Naive thymus-derived CD4-positive, alpha-beta T cell (primary cell): ENCODE measurements at regions of chr5 and their contacts with region 1.

Region 1: DNA sequence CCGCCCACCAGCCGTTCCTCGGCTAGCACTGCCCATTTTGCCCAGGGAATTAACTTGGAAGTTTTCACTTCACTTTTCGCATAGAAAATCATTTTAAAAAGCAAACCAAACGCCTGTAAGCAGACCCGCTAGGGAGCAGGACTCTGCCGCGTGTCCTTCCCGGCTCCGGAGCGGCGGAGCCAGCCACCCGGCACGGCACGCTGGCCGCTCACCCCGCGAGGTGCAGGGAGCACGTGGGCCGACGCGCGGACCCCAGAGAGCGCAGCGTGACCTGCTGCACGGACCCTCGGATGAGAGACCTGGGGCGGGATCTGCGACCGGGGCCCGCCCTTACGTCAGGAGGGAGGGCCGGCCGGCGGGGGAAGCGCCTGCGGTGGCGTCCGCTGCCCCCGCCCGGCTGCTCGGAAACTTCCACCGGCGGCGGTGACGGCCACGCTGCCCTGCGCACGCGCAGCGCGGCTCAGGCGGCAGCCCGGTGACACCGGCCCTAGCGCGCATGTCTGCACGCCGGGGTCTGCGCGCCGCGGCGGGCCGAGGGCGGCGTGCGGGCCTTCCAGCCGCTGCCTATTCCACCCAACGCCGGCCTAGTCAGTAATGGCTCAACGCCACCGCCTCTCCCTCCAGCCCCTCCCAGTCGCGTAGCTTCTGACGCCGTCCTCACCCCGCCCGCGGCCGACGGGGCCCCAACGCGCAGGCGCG is 506 bp upstream of the TENT4A start:
- DNase-seq: peak; percentile 94 to 99 (median 98)
- ATAC-seq: peak; percentile 87
- H3K4me3 ChIP-seq: peak overlapping the region; percentile 95
- H3K4me3 Mint-ChIP-seq: peak overlapping the region; percentile 80 to 92 (median 89)
- H3K27ac ChIP-seq: peak overlapping the region; percentile 95
- H3K27ac Mint-ChIP-seq: peak overlapping the region; percentile 77 to 94 (median 92)
- H3K4me1 ChIP-seq: peaks cover 21 to 24% of the 10 kb centered on the region in 2 donors
- H3K4me1 Mint-ChIP-seq: peaks cover 26 to 44% (median 33%) of the 10 kb centered on the region in 7 donors
- H3K27me3 ChIP-seq: no peaks in the 10 kb centered on the region
- H3K27me3 Mint-ChIP-seq: peaks cover 0 to 4% (median 0%) of the 10 kb centered on the region in 5 donors

Region 2: GRCh38 chr5:5421961-5422818 is 1290.5 kb before region 1 on chr5 and contains the start of gene ICE1:
- CTCF ChIA-PET with region 1: no interaction called
- POLR2A ChIA-PET with region 1: interaction called, 4 read pairs
- intact Hi-C with region 1: loop called in 1 of 2 experiments (anchors 1 kb)
- DNase-seq: peak; percentile 89 to 99 (median 96)
- ATAC-seq: peak; percentile 93
- H3K4me3 ChIP-seq: peak within 1 kb of the TSS; percentile 84
- H3K4me3 Mint-ChIP-seq: peak within 1 kb of the TSS in 7 of 10 donors; percentile 88 to 96 (median 93)
- H3K27ac ChIP-seq: peak within 1 kb of the TSS; percentile 90
- H3K27ac Mint-ChIP-seq: peak within 1 kb of the TSS in 7 of 9 donors; percentile 92 to 99 (median 97)
- H3K4me1 ChIP-seq: peaks cover 33 to 35% of the 10 kb centered on the region in 2 donors
- H3K4me1 Mint-ChIP-seq: peaks cover 6 to 24% (median 16%) of the 10 kb centered on the region in 7 donors
- H3K27me3 ChIP-seq: no peaks in the 10 kb centered on the region
- H3K27me3 Mint-ChIP-seq: no peaks in the 10 kb centered on the region
- total RNA-seq, gene ICE1: 30.2 to 47.6 (median 35.8) TPM

Region 3: DNA sequence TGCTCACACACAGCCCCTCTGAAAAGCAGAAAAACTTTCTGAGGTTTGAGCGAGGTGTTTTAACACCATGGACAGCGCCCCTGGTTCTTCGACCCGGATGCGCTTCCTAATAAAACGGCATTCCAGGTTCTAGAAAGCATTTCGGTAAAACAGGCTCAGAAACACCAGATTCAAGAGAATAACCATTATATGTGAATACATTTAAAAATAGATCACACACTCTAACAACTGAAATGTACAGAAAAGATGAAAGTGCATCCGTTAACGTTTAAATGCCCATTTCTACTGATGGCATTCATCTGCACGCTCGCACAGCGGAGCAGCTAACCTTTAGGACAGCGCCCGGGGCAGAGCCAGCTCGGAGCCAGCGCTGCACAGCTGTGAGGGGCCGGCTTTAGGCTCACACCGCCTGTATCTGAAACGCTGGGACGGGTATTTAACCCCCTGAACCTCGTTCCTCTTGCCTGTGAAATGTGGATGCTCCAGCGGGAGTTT is 25.8 kb before region 1 on chr5:
- CTCF ChIA-PET with region 1: no interaction called
- POLR2A ChIA-PET with region 1: interaction called, 3 read pairs
- intact Hi-C with region 1: loop called in 1 of 2 experiments (anchors 1 kb)
- DNase-seq: peak in 2 of 9 donors; percentile 19 to 30
- ATAC-seq: peak; percentile 64
- H3K4me3 ChIP-seq: no peak overlapping the region
- H3K4me3 Mint-ChIP-seq: peak overlapping the region in 7 of 10 donors; percentile 2 to 63 (median 30)
- H3K27ac ChIP-seq: no peak overlapping the region
- H3K27ac Mint-ChIP-seq: no peak overlapping the region
- H3K4me1 ChIP-seq: no peaks in the 10 kb centered on the region
- H3K4me1 Mint-ChIP-seq: peaks cover 0 to 11% (median 6%) of the 10 kb centered on the region in 7 donors
- H3K27me3 ChIP-seq: peaks cover 0 to 3% of the 10 kb centered on the region in 2 donors
- H3K27me3 Mint-ChIP-seq: peaks cover 35 to 76% (median 54%) of the 10 kb centered on the region in 5 donors

Region 4: GRCh38 chr5:6728011-6728794 is 15.5 kb after region 1 on chr5:
- CTCF ChIA-PET with region 1: interaction called, 5 read pairs
- POLR2A ChIA-PET with region 1: interaction called, 7 read pairs
- intact Hi-C with region 1: loop called (anchors 1 to 2 kb)
- DNase-seq: no peak
- ATAC-seq: no peak
- H3K4me3 ChIP-seq: no peak overlapping the region
- H3K4me3 Mint-ChIP-seq: peak overlapping the region in 9 of 10 donors; percentile 2 to 58 (median 52)
- H3K27ac ChIP-seq: no peak overlapping the region
- H3K27ac Mint-ChIP-seq: peak overlapping the region in 8 of 9 donors; percentile 5 to 82 (median 44)
- H3K4me1 ChIP-seq: peaks cover 22 to 56% of the 10 kb centered on the region in 2 donors
- H3K4me1 Mint-ChIP-seq: peaks cover 75 to 100% (median 95%) of the 10 kb centered on the region in 7 donors
- H3K27me3 ChIP-seq: no peaks in the 10 kb centered on the region
- H3K27me3 Mint-ChIP-seq: no peaks in the 10 kb centered on the region

Region 5: GRCh38 chr5:6745706-6746222 is 33.0 kb after region 1 on chr5:
- CTCF ChIA-PET with region 1: interaction called, 7 read pairs
- POLR2A ChIA-PET with region 1: no interaction called
- intact Hi-C with region 1: loop called (anchors 1 to 2 kb)
- DNase-seq: peak in 7 of 9 donors; percentile 33 to 62 (median 53)
- ATAC-seq: peak; percentile 85
- H3K4me3 ChIP-seq: no peak overlapping the region
- H3K4me3 Mint-ChIP-seq: no peak overlapping the region
- H3K27ac ChIP-seq: no peak overlapping the region
- H3K27ac Mint-ChIP-seq: peak overlapping the region in 3 of 9 donors; percentile 4 to 48 (median 36)
- H3K4me1 ChIP-seq: no peaks in the 10 kb centered on the region
- H3K4me1 Mint-ChIP-seq: peaks cover 2 to 10% (median 6%) of the 10 kb centered on the region in 7 donors
- H3K27me3 ChIP-seq: no peaks in the 10 kb centered on the region
- H3K27me3 Mint-ChIP-seq: no peaks in the 10 kb centered on the region

Region 6: DNA sequence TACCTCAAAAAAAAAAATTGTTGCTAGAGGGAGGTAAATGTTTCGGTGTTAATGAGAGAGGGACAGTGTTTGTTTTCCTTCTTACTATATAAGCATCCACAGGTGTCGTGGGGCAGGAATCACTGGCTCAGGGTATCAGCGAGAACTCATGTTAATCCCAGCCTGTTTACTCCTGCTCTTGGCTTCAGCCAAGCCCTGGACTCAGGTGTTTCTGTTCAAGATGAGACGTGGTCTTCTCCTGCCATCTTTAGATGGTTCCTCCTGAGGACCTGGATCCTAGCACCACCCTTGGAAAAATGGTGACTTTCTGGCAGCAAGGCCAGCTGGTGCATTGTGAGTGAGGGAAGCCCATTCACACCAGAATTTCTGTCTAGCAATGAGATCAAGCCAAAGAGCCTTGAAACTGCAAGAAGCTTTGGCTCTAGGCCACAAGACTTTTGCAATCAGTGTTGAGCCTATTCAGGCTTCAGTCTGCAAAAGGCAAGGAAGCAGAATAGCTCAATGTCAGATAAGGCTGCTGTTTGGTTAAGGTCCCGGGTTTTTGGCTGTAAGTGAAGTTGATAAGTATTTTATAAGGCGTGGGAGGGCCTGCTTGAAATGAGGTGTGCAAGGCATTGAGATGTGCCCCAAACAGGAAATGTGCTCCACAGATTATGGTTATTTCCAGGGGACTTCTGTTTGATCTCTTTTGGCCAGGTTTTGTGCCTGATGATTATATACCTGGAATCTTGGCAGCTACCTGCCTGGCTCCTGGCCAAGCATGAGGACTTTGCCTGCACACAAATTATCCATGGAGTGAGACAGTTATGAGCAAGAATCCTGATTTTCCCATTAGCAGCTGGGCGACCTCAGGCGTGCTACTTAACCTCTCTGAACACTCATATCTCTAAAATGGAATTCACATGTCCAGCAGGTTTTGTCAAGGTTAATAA is 100.3 kb after region 1 on chr5:
- CTCF ChIA-PET with region 1: no interaction called
- POLR2A ChIA-PET with region 1: no interaction called
- intact Hi-C with region 1: no loop called
- DNase-seq: no peak
- ATAC-seq: no peak
- H3K4me3 ChIP-seq: no peak overlapping the region
- H3K4me3 Mint-ChIP-seq: no peak overlapping the region
- H3K27ac ChIP-seq: no peak overlapping the region
- H3K27ac Mint-ChIP-seq: no peak overlapping the region
- H3K4me1 ChIP-seq: no peaks in the 10 kb centered on the region
- H3K4me1 Mint-ChIP-seq: no peaks in the 10 kb centered on the region
- H3K27me3 ChIP-seq: no peaks in the 10 kb centered on the region
- H3K27me3 Mint-ChIP-seq: peaks cover 4 to 15% (median 7%) of the 10 kb centered on the region in 5 donors

Region 7: GRCh38 chr5:6827526-6828219 is 114.9 kb after region 1 on chr5:
- CTCF ChIA-PET with region 1: no interaction called
- POLR2A ChIA-PET with region 1: no interaction called
- intact Hi-C with region 1: loop called in 1 of 2 experiments (anchors 5 kb)
- DNase-seq: peak in 7 of 9 donors; percentile 15 to 34 (median 27)
- ATAC-seq: peak; percentile 87
- H3K4me3 ChIP-seq: peak overlapping the region; percentile 45
- H3K4me3 Mint-ChIP-seq: peak overlapping the region; percentile 79 to 95 (median 86)
- H3K27ac ChIP-seq: no peak overlapping the region
- H3K27ac Mint-ChIP-seq: peak overlapping the region; percentile 44 to 92 (median 83)
- H3K4me1 ChIP-seq: peaks cover 0 to 5% of the 10 kb centered on the region in 2 donors
- H3K4me1 Mint-ChIP-seq: peaks cover 15 to 59% (median 26%) of the 10 kb centered on the region in 7 donors
- H3K27me3 ChIP-seq: no peaks in the 10 kb centered on the region
- H3K27me3 Mint-ChIP-seq: peaks cover 4 to 18% (median 10%) of the 10 kb centered on the region in 5 donors

Region 8: GRCh38 chr5:7815892-7816534 is 1103.3 kb after region 1 on chr5:
- CTCF ChIA-PET with region 1: no interaction called
- POLR2A ChIA-PET with region 1: no interaction called
- intact Hi-C with region 1: no loop called
- DNase-seq: peak in 8 of 9 donors; percentile 16 to 73 (median 38)
- ATAC-seq: peak; percentile 87
- H3K4me3 ChIP-seq: no peak overlapping the region
- H3K4me3 Mint-ChIP-seq: no peak overlapping the region
- H3K27ac ChIP-seq: no peak overlapping the region
- H3K27ac Mint-ChIP-seq: no peak overlapping the region
- H3K4me1 ChIP-seq: no peaks in the 10 kb centered on the region
- H3K4me1 Mint-ChIP-seq: peaks cover 0 to 6% (median 0%) of the 10 kb centered on the region in 7 donors
- H3K27me3 ChIP-seq: no peaks in the 10 kb centered on the region
- H3K27me3 Mint-ChIP-seq: peaks cover 12 to 52% (median 42%) of the 10 kb centered on the region in 5 donors

Region 9: DNA sequence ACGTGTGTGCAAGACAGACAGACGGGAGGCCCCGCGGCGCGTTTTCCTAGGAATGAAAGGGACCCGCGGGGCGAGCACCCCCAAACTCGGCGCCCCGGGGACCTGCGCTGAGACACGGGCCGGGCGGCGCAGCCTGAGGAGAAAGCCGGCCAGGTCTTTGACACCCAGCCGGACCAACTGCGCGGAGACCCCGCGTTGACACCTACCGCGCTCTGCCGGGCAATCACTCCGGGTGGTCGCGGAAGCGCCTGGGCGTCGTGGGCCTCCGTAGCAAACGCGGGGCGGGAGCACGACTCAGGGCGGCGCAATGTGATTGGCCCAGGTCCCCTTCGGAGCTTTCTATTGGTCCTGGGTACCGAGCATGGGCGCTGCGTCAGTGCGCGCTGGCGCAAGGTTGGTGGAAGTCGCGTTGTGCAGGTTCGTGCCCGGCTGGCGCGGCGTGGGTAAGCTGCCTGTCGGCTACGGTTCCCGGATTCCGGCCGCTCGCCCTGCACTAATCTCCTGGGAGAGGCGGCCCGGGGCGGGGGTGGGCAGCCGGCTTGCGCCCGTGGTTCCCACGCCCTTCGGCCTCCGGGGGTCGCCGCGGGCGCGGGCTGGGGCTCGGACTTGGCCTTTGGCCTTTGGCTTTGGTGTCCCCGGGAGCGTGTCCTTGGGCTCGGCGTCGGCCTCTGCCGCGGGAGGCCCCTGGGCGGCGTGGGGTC is 1156.2 kb after region 1 on chr5 and contains the starts of genes FASTKD3 and MTRR:
- CTCF ChIA-PET with region 1: no interaction called
- POLR2A ChIA-PET with region 1: no interaction called
- intact Hi-C with region 1: loop called (anchors 1 kb)
- DNase-seq: peak; percentile 75 to 90 (median 87)
- ATAC-seq: peak; percentile 100
- H3K4me3 ChIP-seq: peak within 1 kb of the TSS; percentile 75
- H3K4me3 Mint-ChIP-seq: peak within 1 kb of the TSS; percentile 90 to 100 (median 96)
- H3K27ac ChIP-seq: peak within 1 kb of the TSS; percentile 87
- H3K27ac Mint-ChIP-seq: peak within 1 kb of the TSS; percentile 85 to 97 (median 93)
- H3K4me1 ChIP-seq: peaks cover 38 to 43% of the 10 kb centered on the region in 2 donors
- H3K4me1 Mint-ChIP-seq: peaks cover 53 to 84% (median 82%) of the 10 kb centered on the region in 7 donors
- H3K27me3 ChIP-seq: no peaks in the 10 kb centered on the region
- H3K27me3 Mint-ChIP-seq: no peaks in the 10 kb centered on the region
- total RNA-seq, gene FASTKD3: 4.2 to 15.3 (median 10.0) TPM
- total RNA-seq, gene MTRR: 65.7 to 83.2 (median 70.2) TPM